Activated CD4-positive, alpha-beta T cell treated with anti-CD3 and anti-CD28 coated beads, Interleukin-2, amount 10 ng/mL, durations not matched to agents 24 days and 14 days (primary cell): ENCODE measurements at regions of chr16 and their contacts with region 1.

Region 1: DNA sequence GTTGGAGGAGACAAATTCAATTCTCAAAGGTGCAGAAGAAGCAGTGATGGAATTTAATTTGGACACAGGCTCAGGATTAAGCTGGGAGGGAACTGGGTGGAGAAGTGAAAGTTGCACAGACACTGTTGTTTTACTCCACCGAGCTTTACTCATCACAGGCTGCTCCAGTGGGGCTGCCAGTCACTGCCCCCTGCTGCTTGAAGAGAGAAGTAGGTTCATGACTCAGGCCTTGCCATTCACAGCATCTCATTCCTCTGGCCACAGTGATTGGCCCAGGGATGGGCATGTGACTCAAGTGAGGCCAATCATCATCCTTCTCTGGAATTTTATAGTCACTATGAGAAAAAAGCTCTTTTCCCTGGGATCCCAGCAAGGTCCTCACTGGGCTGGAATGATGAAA is 11.8 kb downstream of the GNAO1 start:
- DNase-seq: peak; percentile 84
- H3K4me3 Mint-ChIP-seq: no peak overlapping the region
- H3K27ac Mint-ChIP-seq: no peak overlapping the region
- H3K4me1 Mint-ChIP-seq: peaks cover 22% of the 10 kb centered on the region
- H3K27me3 Mint-ChIP-seq: peaks cover 24% of the 10 kb centered on the region

Region 2: GRCh38 chr16:56041686-56042085 is 161.4 kb before region 1 on chr16:
- intact Hi-C with region 1: loop called (anchors 5 kb)
- DNase-seq: peak; percentile 72
- H3K4me3 Mint-ChIP-seq: no peak overlapping the region
- H3K27ac Mint-ChIP-seq: no peak overlapping the region
- H3K4me1 Mint-ChIP-seq: no peaks in the 10 kb centered on the region
- H3K27me3 Mint-ChIP-seq: peaks cover 9% of the 10 kb centered on the region

Region 3: DNA sequence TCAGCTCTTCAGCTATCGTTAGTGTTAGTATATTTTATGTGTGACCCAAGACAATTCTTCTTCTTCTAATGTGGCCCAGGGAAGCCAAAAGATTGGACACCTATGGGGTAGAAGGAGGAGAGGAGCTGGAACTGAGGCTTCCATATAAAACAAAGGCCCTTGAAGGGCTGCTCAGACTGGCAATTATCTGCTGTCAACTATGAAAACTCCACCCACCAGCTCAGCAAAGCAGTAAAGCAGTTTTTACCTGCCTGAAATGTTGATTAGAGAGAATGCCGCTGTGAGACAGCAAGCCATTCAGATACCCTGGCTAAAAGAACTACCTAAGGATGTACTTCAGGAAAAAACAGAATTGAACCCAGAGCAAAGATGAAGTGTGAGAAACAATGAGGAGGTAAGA is 57.7 kb before region 1 on chr16:
- intact Hi-C with region 1: no loop called
- DNase-seq: no peak
- H3K4me3 Mint-ChIP-seq: no peak overlapping the region
- H3K27ac Mint-ChIP-seq: no peak overlapping the region
- H3K4me1 Mint-ChIP-seq: no peaks in the 10 kb centered on the region
- H3K27me3 Mint-ChIP-seq: peaks cover 51% of the 10 kb centered on the region

Region 4: DNA sequence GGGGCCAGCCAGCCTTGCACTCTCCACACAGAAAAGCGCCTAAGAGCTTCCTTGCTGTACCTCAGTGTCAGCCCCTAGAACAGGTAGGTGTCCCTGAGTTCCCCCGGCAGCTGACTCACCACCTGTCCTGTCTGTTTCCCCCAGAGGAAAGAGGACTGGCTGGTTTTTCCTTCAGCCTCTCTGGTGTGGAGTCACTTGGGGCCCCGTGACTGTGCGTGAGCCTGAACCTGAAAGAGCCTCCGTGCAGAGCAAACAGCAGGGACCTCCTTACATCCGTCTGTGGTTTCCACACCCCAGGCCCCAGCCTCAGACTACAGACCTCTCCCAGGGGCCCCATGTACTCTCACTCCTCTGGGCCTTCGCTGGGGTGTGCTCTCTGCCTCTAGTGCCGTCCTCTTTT is 76.1 kb after region 1 on chr16:
- intact Hi-C with region 1: loop called (anchors 2 kb)
- DNase-seq: peak; percentile 86
- H3K4me3 Mint-ChIP-seq: peak overlapping the region; percentile 45
- H3K27ac Mint-ChIP-seq: peak overlapping the region; percentile 81
- H3K4me1 Mint-ChIP-seq: peaks cover 26% of the 10 kb centered on the region
- H3K27me3 Mint-ChIP-seq: peaks cover 26% of the 10 kb centered on the region

Region 5: DNA sequence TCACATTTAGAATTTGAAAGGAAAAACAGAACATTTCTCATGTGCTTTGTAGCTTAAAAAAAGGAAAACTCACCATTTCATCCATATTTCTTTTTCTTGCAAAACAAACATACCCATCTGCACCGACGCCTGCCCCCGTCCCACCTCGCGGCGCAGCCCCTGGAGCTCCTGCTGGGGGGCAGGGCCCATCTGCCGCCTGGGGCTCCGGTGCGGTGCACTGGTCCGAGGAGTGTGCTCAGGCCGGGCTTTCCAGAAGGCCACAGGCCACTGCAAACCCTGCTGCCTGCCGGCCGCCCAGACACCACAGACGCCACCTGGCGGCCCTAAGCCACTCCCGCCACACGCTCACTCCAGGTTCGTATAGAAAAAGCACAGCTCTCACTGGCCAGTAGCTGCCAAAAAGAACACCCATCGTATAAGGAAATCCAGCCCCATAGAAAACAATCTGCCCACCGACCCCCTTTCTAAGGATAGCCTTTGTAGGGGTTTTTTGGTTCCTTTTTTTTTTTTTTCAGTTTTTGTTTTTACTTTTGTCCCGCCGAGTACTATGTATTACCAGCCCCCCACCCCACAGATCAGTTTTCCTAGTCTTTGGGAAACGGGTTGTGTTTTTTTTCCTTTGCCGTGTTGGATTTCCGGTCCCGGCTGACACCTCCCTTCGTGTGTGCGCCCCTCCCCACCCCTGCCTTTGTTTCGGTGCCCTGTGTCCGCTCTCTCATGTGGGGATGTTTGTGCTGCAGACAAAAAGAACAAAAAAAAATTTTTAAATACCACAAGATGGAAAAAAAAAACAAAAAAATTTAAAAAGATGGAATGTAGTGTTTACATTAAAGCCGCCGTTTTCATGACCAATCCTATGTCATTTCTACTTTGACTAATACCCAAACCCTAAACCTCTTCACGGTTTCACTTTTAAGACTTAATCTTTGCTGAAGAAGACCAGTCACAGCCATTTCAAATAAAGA is 153.5 kb after region 1 on chr16:
- intact Hi-C with region 1: loop called (anchors 2 kb)
- DNase-seq: peak; percentile 88
- H3K4me3 Mint-ChIP-seq: peak overlapping the region; percentile 82
- H3K27ac Mint-ChIP-seq: peak overlapping the region; percentile 97
- H3K4me1 Mint-ChIP-seq: peaks cover 33% of the 10 kb centered on the region
- H3K27me3 Mint-ChIP-seq: no peaks in the 10 kb centered on the region